ENCODE measurements at regions of chr7 and their contacts with region 1.

Region 1: GRCh38 chr7:7640221-7641128 is at the start of gene UMAD1:
- DNase-seq: peak; percentile 98
- H3K4me3 Mint-ChIP-seq: peak within 1 kb of the TSS; percentile 96
- H3K27ac Mint-ChIP-seq: peak within 1 kb of the TSS; percentile 97
- H3K4me1 Mint-ChIP-seq: peaks cover 40% of the 10 kb centered on the region
- H3K27me3 Mint-ChIP-seq: no peaks in the 10 kb centered on the region
- total RNA-seq, gene UMAD1: 13.6 and 14.2 TPM in 2 replicates

Region 2: DNA sequence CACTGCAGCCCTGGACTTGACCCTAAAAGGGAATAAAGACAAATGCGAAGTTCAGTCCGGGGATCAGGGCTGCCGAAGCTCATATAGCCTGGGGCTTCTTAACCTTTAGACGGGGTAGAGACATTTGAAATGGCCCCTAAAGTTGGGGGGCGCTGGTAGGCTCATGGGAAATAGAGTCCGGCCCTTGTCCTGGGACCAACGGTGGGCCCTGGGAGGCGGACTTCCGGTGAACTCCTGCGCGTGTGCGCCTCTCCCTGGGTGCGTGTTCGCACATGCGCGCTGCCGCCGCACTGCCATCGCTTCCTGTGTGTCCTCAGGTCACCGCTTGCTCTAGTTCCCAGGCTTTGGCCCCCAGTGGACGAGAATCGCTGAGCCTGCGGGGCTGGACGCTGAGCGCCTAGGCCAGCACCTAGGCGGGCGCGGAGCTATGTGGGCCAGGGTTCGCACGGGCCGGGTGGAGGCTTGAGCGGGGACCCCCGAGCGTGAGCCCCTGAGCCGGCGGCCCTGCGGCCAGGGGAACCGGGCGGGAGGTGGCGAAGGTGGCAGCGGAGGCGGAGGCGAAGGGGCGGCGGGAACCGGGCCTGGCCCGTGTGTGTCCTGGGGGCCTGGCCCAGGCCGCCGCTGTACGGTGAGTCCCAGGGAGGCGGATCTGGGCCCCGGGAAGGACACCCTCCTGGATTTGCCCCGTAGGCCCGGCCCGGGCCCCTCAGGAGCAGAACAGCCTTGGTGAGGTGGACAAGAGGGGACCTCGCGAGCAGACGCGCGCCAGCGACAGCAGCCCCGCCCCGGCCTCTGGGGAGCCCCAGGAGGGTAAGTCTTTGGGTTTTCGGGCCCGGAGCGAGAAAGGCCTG is 910.8 kb before region 1 on chr7:
- intact Hi-C with region 1: loop called (anchors 10 kb)
- DNase-seq: peak; percentile 81
- H3K4me3 Mint-ChIP-seq: peak overlapping the region; percentile 93
- H3K27ac Mint-ChIP-seq: peak overlapping the region; percentile 80
- H3K4me1 Mint-ChIP-seq: peaks cover 27% of the 10 kb centered on the region
- H3K27me3 Mint-ChIP-seq: peaks cover 2% of the 10 kb centered on the region

Region 3: GRCh38 chr7:7221602-7222038 is 418.9 kb before region 1 on chr7:
- intact Hi-C with region 1: no loop called
- DNase-seq: no peak
- H3K4me3 Mint-ChIP-seq: no peak overlapping the region
- H3K27ac Mint-ChIP-seq: no peak overlapping the region
- H3K4me1 Mint-ChIP-seq: peaks cover 27% of the 10 kb centered on the region
- H3K27me3 Mint-ChIP-seq: no peaks in the 10 kb centered on the region

Region 4: GRCh38 chr7:7566651-7567611 is 73.5 kb before region 1 on chr7 and contains the start of gene MIOS:
- intact Hi-C with region 1: loop called (anchors 1 kb)
- DNase-seq: peak; percentile 80
- H3K4me3 Mint-ChIP-seq: peak within 1 kb of the TSS; percentile 88
- H3K27ac Mint-ChIP-seq: peak within 1 kb of the TSS; percentile 73
- H3K4me1 Mint-ChIP-seq: peaks cover 35% of the 10 kb centered on the region
- H3K27me3 Mint-ChIP-seq: no peaks in the 10 kb centered on the region
- total RNA-seq, gene MIOS: 29.6 and 31.6 TPM in 2 replicates

Region 5: DNA sequence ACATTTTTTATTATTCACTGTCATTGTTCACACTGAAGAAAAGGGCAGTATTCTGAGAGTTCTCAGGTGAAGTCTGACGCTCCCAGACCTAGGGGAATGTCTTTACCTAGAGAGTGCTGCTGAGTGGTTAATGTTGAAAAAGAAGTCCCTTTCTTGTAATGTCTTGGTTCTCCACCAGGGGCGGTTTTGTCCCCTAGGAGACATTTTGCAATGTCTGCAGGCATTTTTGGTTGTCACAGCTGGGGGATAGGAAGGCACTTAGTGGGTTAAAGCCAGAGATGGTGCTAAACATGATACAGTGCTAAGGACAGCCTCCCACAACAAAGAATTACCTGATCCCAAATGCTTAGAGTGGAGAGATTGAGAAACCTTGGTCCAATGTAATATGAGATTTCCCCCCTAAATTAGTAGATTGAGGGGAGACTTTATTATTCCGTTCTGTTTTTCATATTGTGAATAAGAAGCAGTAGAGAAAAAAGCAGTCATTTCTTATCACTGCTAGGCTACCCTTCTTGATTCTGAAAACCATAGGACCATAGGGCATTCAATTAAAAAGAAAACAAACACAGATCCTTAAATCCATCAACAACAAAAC is 13.2 kb after region 1 on chr7:
- intact Hi-C with region 1: no loop called
- DNase-seq: no peak
- H3K4me3 Mint-ChIP-seq: no peak overlapping the region
- H3K27ac Mint-ChIP-seq: no peak overlapping the region
- H3K4me1 Mint-ChIP-seq: peaks cover 26% of the 10 kb centered on the region
- H3K27me3 Mint-ChIP-seq: peaks cover 4% of the 10 kb centered on the region

Region 6: DNA sequence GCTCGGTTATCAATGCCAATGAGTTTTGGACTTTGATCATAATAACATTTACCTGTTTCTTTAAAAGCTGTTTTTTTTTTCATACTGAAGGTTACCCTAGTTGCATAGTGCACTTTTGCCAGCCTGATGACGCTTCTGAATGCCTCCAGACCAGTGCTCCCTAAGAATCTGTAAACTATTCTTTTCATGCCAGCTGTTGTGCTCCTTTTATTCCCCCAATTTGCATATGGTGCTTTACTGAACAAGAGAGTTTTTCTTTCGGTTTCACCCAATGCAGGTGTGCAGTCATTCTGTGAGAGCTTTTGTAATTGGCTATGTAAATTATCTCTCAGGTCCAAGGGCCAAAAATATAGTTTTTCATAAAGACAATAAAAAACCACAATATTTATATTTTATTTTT is 280.0 kb after region 1 on chr7:
- intact Hi-C with region 1: loop called (anchors 1 kb)
- DNase-seq: peak; percentile 12
- H3K4me3 Mint-ChIP-seq: no peak overlapping the region
- H3K27ac Mint-ChIP-seq: no peak overlapping the region
- H3K4me1 Mint-ChIP-seq: peaks cover 44% of the 10 kb centered on the region
- H3K27me3 Mint-ChIP-seq: peaks cover 3% of the 10 kb centered on the region

Region 7: GRCh38 chr7:8134089-8134733 is 493.7 kb after region 1 on chr7:
- intact Hi-C with region 1: loop called (anchors 1 kb)
- DNase-seq: peak; percentile 46
- H3K4me3 Mint-ChIP-seq: peak overlapping the region; percentile 10
- H3K27ac Mint-ChIP-seq: peak overlapping the region; percentile 70
- H3K4me1 Mint-ChIP-seq: peaks cover 63% of the 10 kb centered on the region
- H3K27me3 Mint-ChIP-seq: no peaks in the 10 kb centered on the region